ENCODE measurements at regions of chr11 and their contacts with region 1.

Region 1: DNA sequence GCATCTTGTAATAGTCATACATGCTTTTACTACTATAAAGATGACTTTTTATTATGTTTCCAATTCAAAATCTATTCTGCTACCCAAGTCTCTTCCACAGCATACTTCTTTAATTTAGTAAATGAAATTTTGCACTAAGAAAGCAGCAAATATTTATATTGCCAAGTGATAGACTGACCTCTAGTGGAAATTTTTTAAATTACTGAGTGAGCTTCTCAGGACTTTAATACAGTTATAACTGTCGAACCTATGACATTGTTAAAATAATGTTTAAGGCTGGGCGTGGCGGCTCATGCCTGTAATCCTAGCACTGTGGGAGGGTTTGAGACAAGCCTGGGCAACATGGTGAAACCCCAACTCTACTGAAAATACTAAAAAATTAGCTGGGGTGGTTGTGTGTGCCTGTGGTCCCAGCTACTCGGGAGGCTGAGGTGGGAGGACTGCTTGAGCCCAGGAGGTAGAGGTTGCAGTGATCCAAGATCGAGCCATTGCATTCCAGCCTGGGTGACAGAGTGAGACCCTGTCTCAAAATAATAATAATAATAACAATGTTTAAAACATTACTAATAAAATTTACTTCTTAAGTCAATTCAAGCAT is 27.3 kb downstream of the STK33 start:
- DNase-seq: no peak
- H3K4me3 Mint-ChIP-seq: no peak overlapping the region
- H3K27ac Mint-ChIP-seq: no peak overlapping the region
- H3K4me1 Mint-ChIP-seq: peaks cover 5% of the 10 kb centered on the region
- H3K27me3 Mint-ChIP-seq: peaks cover 21% of the 10 kb centered on the region

Region 2: DNA sequence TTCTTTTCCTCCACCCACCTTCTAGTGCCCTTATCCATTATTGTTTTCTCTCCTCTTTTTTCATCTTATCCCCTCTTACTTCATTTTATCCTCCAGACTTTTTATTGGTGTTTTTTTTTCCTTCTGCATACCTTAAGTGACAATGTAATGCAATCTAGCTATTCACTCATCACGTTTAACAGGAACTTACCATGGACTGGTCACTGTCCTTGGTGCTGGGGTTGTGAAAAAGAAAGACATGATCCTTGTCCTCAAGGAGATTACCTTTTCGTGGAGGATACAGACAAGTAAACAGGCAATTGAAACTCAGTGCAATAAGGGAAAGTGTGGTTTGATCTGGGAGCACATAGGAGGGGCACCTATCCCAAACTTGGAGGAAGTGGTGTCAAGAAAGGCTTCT is 1294.3 kb before region 1 on chr11:
- CTCF ChIA-PET with region 1: no interaction called
- intact Hi-C with region 1: no loop called
- DNase-seq: no peak
- H3K4me3 Mint-ChIP-seq: no peak overlapping the region
- H3K27ac Mint-ChIP-seq: no peak overlapping the region
- H3K4me1 Mint-ChIP-seq: no peaks in the 10 kb centered on the region
- H3K27me3 Mint-ChIP-seq: peaks cover 3% of the 10 kb centered on the region

Region 3: DNA sequence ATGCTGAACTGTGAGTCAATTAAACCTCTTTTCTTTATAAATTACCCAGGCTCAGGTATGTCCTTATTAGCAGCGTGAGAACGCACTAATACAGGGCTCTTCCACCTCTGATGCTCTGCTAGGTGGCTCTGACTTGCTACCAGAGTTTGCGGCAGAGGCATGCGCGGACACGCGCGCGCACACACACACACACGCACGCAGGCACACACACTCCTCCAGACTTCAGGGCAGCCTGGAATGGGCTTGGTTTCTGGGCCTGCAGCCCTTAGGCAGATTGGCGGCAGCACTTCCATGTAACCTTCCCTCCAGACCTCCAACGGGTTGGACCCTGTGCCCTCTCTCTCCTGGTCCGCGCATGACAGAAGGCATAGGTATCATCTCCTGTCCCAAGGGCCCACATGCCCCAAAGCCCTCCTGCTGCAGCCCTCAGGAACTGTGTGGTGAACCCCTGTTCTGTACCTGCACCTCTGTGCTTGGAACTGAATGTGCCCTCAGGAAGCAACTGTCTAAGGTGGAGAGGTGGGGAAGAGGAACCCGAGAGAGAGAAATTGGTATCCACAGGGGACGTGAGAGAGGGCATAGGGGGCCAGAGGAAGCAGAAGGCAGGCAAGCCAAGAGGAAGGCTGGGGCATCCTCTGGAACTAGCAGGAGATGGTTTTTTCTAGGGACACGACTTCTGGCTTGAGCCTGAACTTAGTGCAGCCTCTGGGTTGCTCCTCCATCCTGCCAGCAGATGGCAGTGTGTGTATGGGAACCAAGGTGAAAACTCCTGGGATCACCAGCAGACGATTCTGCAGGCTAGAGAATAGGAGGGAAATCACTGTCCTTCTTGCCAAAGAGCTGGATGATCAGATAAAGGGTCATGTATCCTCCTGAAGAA is 374.5 kb before region 1 on chr11:
- CTCF ChIA-PET with region 1: interaction called, 15 read pairs
- intact Hi-C with region 1: loop called (anchors 1 kb)
- DNase-seq: peak; percentile 68
- H3K4me3 Mint-ChIP-seq: no peak overlapping the region
- H3K27ac Mint-ChIP-seq: no peak overlapping the region
- H3K4me1 Mint-ChIP-seq: no peaks in the 10 kb centered on the region
- H3K27me3 Mint-ChIP-seq: peaks cover 25% of the 10 kb centered on the region

Region 4: DNA sequence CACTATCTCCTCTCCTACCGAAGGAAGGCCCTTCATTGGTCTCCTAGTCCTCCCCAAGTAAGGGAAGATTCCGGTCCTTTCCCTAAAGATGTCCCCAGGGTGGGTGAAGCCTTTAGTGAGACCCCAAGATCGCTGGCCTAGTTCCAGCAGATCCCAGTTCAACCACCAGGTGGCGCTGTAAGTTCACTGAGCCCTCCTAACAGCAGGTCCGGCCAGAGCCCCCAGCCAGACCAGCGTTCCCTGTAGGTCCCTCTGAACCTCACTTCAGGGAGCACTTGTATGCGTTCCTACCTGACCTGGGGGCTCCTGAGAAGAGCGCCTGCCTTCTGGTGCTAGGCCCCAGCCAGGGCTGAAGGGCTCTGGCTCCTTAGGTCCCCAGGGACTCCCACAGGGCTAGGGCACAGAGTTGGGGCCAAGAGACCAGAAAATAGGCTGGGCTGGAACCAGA is 341.1 kb before region 1 on chr11:
- CTCF ChIA-PET with region 1: interaction called, 4 read pairs
- intact Hi-C with region 1: loop called (anchors 1 kb)
- DNase-seq: peak; percentile 75
- H3K4me3 Mint-ChIP-seq: no peak overlapping the region
- H3K27ac Mint-ChIP-seq: no peak overlapping the region
- H3K4me1 Mint-ChIP-seq: no peaks in the 10 kb centered on the region
- H3K27me3 Mint-ChIP-seq: no peaks in the 10 kb centered on the region

Region 5: GRCh38 chr11:8247312-8247711 is 319.4 kb before region 1 on chr11:
- CTCF ChIA-PET with region 1: no interaction called
- intact Hi-C with region 1: loop called (anchors 1 kb)
- DNase-seq: peak; percentile 40
- H3K4me3 Mint-ChIP-seq: no peak overlapping the region
- H3K27ac Mint-ChIP-seq: no peak overlapping the region
- H3K4me1 Mint-ChIP-seq: no peaks in the 10 kb centered on the region
- H3K27me3 Mint-ChIP-seq: no peaks in the 10 kb centered on the region

Region 6: DNA sequence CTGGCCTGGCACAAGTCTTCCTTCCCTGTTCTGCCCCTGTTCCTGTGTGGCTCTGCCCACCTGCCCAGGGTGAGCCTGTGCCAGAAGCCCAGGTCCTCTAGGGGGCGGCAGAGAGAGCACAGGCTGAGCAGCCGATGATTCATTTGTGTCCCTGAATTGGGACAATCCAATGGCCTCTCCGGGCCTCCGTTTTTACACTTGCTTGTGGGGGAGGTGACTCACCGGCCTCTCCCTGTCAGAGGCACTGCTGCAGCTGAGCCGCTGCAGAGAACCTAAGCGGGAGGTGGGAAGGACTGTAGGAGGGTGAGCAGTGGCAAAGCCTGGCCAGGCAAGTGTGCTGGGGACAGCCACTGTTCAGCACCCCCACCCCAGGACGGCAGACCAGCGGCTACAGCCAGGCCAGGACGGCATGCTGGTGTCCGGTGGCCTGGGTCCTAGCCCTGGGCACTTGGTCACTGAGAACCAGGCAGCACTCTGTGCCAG is 237.8 kb before region 1 on chr11:
- CTCF ChIA-PET with region 1: no interaction called
- intact Hi-C with region 1: loop called (anchors 1 kb)
- DNase-seq: peak; percentile 92
- H3K4me3 Mint-ChIP-seq: no peak overlapping the region
- H3K27ac Mint-ChIP-seq: no peak overlapping the region
- H3K4me1 Mint-ChIP-seq: no peaks in the 10 kb centered on the region
- H3K27me3 Mint-ChIP-seq: peaks cover 16% of the 10 kb centered on the region

Region 7: DNA sequence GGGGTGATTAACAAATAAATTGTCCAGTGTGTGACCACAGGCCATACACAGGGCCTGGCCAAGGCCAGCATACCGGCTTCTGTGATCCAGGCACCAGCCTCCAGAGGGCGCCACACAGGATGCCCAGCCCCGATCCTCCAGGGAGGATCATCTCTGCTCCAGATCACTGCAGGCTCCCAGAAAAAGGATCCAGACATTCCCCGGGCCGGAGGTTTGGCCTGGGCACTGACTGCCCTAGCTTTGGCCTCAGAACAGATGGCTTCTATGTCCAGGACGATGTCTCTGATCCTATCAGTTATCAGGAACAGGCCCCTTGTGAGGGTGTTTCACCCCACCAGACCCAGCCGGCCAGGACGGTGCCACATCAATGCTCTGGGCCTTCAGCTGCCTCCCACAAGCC is 228.6 kb before region 1 on chr11:
- CTCF ChIA-PET with region 1: interaction called, 3 read pairs
- intact Hi-C with region 1: loop called (anchors 1 kb)
- DNase-seq: peak; percentile 49
- H3K4me3 Mint-ChIP-seq: no peak overlapping the region
- H3K27ac Mint-ChIP-seq: no peak overlapping the region
- H3K4me1 Mint-ChIP-seq: no peaks in the 10 kb centered on the region
- H3K27me3 Mint-ChIP-seq: peaks cover 2% of the 10 kb centered on the region

Region 8: DNA sequence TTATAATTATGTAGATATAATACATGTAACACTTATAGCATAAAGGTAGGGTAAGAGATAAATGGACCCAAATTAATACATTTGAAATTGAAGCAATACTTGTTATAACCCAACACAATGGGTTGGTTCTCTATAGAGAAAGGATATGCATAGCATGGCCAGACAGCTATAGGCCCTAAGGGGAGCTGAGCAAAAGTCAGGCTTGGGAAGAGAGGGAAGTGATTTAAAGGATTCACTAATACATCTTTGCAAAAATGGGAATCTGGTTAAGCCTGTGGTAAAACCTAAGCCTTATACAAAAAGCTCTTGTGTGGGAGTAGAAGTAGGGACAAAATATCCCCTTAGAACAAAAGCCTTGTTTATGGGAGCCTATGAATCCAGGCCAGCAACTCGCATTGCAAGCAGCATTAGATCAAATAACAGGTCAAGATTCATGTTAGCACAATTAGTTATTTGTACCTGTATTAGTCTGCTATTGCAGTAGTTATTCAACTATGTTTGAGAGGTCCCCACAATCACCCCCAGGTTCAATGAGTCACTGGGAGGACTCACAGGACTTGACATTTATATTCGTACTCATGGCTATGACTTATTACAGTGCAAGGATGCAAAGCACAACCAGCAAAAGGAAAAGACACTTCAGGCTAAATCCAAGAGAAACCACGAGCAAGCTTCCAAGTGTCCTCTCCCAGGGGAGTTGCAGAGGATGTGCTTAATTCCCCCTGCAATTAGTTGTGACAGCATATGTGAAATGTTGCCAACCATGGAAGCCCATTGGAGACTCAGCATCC is 158.4 kb before region 1 on chr11:
- CTCF ChIA-PET with region 1: no interaction called
- intact Hi-C with region 1: no loop called
- DNase-seq: no peak
- H3K4me3 Mint-ChIP-seq: no peak overlapping the region
- H3K27ac Mint-ChIP-seq: no peak overlapping the region
- H3K4me1 Mint-ChIP-seq: no peaks in the 10 kb centered on the region
- H3K27me3 Mint-ChIP-seq: no peaks in the 10 kb centered on the region

Region 9: GRCh38 chr11:8523396-8523795 is 43.3 kb before region 1 on chr11:
- CTCF ChIA-PET with region 1: no interaction called
- intact Hi-C with region 1: no loop called
- DNase-seq: no peak
- H3K4me3 Mint-ChIP-seq: no peak overlapping the region
- H3K27ac Mint-ChIP-seq: no peak overlapping the region
- H3K4me1 Mint-ChIP-seq: no peaks in the 10 kb centered on the region
- H3K27me3 Mint-ChIP-seq: peaks cover 2% of the 10 kb centered on the region

Region 10: GRCh38 chr11:8577791-8578581 is 11.3 kb after region 1 on chr11:
- CTCF ChIA-PET with region 1: no interaction called
- intact Hi-C with region 1: no loop called
- DNase-seq: no peak
- H3K4me3 Mint-ChIP-seq: no peak overlapping the region
- H3K27ac Mint-ChIP-seq: no peak overlapping the region
- H3K4me1 Mint-ChIP-seq: no peaks in the 10 kb centered on the region
- H3K27me3 Mint-ChIP-seq: peaks cover 8% of the 10 kb centered on the region